Panc1 (cell line): ENCODE measurements at regions of chr16 and their contacts with region 1.

Region 1: DNA sequence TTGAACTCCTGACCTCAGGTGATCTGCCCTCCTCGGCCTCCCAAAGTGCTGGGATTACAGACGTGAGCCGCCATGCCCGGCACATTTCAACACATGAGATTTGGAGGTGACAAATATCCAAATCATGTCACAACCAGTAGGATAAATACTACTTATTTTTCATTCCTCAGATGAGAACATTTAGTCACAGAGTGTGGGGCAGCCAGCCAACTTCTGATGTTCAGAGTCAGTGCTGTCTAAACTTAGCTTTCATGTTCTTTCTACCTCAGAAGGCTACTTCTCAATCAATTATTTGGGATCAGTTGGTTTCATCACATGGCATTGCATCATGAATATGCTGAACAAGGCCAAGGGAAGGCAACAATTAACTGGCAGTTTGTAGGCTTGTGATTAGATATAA is 134.5 kb downstream of the CDH13 start:
- DNase-seq: no peak
- ATAC-seq: no peak
- H3K4me3 ChIP-seq: no peak overlapping the region
- H3K27ac ChIP-seq: no peak overlapping the region
- H3K4me1 ChIP-seq: no peaks in the 10 kb centered on the region
- H3K27me3 ChIP-seq: no peaks in the 10 kb centered on the region
- CTCF ChIP-seq: no peak

Region 2: DNA sequence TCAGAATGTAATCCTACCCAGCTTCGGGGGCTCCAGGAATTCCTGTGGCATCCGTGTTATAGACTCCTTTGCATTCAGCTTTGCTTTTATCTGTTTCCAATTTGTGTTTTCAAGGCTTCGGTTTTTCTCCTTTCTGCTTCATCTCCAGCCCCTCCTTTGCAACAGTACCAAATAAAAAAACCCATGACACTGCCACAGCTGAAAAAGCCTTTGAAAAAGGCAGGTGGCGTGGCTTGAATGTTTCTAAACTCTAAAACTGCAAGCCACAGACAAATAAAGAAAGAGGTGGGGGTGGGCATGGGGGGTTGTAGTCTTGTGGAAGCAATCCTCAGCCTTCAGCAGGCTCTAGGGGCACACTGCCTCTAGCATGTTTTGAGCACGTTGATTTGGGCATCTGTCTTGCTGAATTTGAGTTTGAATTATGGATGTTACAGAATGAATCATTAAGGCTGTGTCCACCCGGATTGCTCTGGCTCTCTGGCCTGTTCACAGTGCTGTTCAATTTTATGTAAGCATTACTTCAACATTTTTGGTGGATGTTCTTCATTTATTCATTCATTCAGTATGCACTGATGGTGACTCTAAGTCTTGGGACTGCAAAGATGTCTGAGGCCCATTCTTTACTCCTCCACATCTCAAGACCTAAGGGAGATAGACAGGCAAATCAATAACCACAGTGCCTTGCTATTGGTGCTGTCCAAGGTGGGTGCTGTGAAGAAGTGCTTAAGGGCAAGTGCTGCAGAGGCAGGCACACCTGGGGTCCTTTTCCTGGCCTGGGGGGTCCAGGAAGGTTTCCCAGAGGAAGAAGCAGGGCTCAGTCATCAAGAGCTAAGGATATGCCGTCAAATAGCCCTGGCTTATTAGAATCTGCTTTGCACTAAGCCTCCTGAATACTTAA is 57.1 kb before region 1 on chr16:
- CTCF ChIA-PET with region 1: interaction called, 10 read pairs
- POLR2A ChIA-PET with region 1: no interaction called
- in situ Hi-C with region 1: no loop called
- intact Hi-C with region 1: no loop called
- DNase-seq: no peak
- ATAC-seq: no peak
- H3K4me3 ChIP-seq: no peak overlapping the region
- H3K27ac ChIP-seq: no peak overlapping the region
- H3K4me1 ChIP-seq: no peaks in the 10 kb centered on the region
- H3K27me3 ChIP-seq: no peaks in the 10 kb centered on the region; the same call in 1 of the 2 replicates
- CTCF ChIP-seq: no peak